ENCODE measurements at regions of chr12 and their contacts with region 1.

Region 1: DNA sequence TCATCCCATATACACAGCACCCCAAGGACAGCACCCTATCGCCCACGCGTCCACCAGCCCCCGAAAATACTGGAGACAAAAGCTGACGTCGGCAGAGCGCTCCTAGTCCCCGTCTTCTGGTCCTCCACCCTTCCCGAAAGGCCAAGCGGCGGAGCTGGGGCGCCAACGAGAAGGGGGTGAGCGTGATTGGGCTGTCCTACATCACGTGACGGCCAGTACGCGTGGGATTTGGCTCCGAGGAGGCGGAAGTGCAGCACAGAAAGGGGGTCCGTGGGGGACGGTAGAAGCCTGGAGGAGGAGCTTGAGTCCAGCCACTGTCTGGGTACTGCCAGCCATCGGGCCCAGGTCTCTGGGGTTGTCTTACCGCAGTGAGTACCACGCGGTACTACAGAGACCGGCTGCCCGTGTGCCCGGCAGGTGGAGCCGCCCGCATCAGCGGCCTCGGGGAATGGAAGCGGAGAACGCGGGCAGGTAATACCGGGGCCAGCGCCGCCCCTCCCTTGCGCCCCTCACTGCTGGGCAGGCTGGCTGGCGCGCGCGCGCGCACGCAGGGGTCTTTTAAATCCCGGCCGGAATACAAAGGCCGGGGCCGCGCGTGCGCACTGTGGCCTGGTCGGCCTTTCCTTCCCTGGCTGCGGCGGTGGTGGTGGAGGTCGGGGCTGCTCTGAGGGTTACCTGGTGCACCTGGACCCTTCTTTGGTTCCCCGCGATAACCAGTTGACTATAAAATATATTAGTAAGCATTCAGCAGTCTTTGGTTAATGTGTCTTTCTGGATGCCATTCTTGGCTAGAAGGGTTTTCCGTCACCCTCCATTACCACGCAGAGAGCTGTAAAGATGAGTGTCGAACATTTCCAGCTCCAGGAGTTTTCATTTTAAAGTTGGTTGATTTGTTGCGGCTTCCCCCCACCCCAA is at the start of gene TDG:
- ATAC-seq: peak; percentile 85 to 95 (median 93)
- H3K4me3 ChIP-seq: peak within 1 kb of the TSS; percentile 57 to 91 (median 70)
- H3K27ac ChIP-seq: peak within 1 kb of the TSS; percentile 97 to 98
- H3K4me1 ChIP-seq: peaks cover 21 to 29% of the 10 kb centered on the region in 2 donors
- total RNA-seq, gene TDG: 21.5 to 49.3 (median 32.8) TPM

Region 2: GRCh38 chr12:104108755-104109445 is 143.1 kb after region 1 on chr12:
- in situ Hi-C with region 1: loop called in 1 of 9 experiments (anchors 25 kb)
- ATAC-seq: peak; percentile 86 to 99 (median 92)
- H3K4me3 ChIP-seq: no peak overlapping the region
- H3K27ac ChIP-seq: no peak overlapping the region
- H3K4me1 ChIP-seq: no peaks in the 10 kb centered on the region